Activated T-helper 2 cell treated with anti-CD3 and anti-CD28 coated beads, Interferon-gamma antibody, Interleukin-2, Interleukin-4, amounts not matched to agents 10 μg/mL and 5 μg/mL and 100 μg/mL, durations not matched to agents 14 hours and 24 hours and 36 hours (primary cell): ENCODE measurements at regions of chr10 and their contacts with region 1.

Region 1: DNA sequence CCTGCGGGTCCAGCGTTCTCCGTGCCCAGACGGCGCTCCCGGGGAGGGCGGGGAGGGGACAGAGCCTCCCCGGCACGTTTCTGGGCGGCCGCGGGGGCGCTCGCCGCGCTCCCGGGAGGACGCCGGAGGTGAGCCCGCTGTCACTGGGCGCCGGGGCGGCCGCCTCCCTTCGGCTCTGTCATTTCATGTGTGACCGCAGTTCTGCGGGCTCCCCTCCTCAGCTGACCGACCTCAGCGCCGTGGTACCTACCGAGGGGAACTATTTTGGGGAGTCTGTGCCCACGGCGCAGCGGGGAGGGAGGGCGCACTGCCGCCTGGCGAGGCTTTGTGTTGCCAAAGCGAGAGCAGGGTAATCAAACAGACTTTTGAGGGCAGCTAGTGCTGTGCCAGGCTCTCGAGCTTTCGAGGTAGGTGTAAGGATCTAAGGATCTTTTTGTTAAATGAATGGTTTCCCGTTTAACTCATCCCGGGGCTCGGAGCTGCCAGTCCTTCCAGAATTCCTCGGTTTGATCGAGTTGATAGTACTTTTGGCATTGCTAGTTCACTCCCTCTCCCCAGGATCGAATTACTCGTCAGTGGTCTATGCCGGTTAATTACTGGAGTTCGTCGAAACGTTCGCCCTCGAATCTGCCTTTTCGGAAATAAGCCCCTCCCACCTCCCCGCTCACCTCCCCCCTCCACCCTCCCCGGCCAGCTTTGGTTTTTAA is 1.9 kb downstream of the ARID5B start:
- DNase-seq: peak; percentile 68
- H3K4me3 Mint-ChIP-seq: peak overlapping the region; percentile 95
- H3K27ac Mint-ChIP-seq: peak overlapping the region; percentile 93
- H3K4me1 Mint-ChIP-seq: peaks cover 40% of the 10 kb centered on the region
- H3K27me3 Mint-ChIP-seq: no peaks in the 10 kb centered on the region

Region 2: DNA sequence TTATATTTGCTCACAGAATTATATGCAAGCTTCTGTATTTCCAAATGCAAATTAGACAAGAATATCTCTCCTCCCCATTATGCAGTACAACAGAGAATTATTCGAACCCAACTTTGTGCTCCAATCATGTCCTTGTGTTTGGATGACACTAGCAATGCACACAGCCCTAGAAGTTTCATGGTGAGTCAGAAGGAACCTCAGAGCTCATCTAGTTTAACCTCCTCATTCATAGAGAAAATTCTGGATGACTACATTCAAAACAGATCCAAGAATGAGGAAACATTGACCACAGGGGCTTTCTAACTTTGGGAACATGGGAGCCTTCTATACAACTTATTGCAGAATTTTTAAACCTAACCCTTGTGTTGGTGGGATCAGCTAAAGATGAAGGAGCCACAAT is 14.6 kb before region 1 on chr10:
- intact Hi-C with region 1: no loop called
- DNase-seq: no peak
- H3K4me3 Mint-ChIP-seq: no peak overlapping the region
- H3K27ac Mint-ChIP-seq: no peak overlapping the region
- H3K4me1 Mint-ChIP-seq: peaks cover 6% of the 10 kb centered on the region
- H3K27me3 Mint-ChIP-seq: peaks cover 3% of the 10 kb centered on the region

Region 3: GRCh38 chr10:61937631-61938351 is 34.4 kb after region 1 on chr10:
- intact Hi-C with region 1: loop called (anchors 1 kb)
- DNase-seq: no peak
- H3K4me3 Mint-ChIP-seq: peak overlapping the region; percentile 51
- H3K27ac Mint-ChIP-seq: peak overlapping the region; percentile 91
- H3K4me1 Mint-ChIP-seq: peaks cover 73% of the 10 kb centered on the region
- H3K27me3 Mint-ChIP-seq: no peaks in the 10 kb centered on the region

Region 4: DNA sequence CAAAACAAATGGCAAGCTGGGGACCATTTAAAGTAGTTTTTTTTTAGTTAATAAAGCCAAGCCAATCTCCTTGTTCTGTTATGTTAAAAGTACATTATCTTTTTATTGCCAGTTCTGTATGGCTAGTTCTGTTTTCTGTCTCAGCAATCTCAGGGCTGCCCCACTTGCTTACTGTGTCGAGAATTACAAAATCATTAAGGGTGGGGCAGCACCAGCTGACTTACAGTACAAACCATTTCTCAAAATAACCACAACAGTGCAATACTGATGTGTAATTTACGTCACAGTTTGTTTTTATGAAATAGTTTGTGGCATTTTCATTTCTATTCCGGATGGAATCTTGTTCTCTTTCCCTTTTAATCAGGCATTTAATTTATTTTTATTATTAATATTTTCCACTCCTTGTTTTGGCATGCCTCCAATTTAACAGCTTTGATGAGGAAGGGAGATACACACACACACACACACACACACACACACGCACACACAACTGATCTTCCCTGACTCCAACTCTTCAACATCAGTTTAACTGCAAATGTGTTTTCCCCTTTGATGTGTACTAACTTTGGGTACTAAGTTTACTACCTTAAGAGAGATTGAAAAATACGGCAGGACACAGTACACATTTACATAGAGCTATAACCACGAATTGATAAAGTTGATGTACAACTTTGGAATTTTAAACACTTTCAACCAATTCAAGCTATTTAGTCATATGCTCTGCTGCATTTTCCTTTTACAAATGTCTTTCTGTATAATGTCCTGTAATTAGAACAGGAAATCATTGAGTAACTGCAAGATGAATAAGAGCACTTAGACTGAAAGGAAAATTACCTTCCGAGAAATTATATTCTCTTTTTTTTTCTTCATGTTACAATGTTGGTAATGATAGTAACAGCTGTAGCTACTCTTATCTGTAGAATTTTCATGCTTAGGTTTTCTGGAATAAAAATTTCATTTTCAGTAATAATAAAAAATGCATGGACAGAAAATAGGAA is 89.6 kb after region 1 on chr10:
- intact Hi-C with region 1: loop called (anchors 1 kb)
- DNase-seq: peak; percentile 49
- H3K4me3 Mint-ChIP-seq: peak overlapping the region; percentile 73
- H3K27ac Mint-ChIP-seq: peak overlapping the region; percentile 88
- H3K4me1 Mint-ChIP-seq: peaks cover 68% of the 10 kb centered on the region
- H3K27me3 Mint-ChIP-seq: no peaks in the 10 kb centered on the region

Region 5: GRCh38 chr10:62528441-62528840 is 625.1 kb after region 1 on chr10:
- intact Hi-C with region 1: loop called (anchors 5 kb)
- DNase-seq: no peak
- H3K4me3 Mint-ChIP-seq: peak overlapping the region; percentile 1
- H3K27ac Mint-ChIP-seq: peak overlapping the region; percentile 23
- H3K4me1 Mint-ChIP-seq: peaks cover 33% of the 10 kb centered on the region
- H3K27me3 Mint-ChIP-seq: peaks cover 14% of the 10 kb centered on the region